ENCODE measurements at regions of chr10 and their contacts with region 1.

Region 1: GRCh38 chr10:103685880-103686669 is 169.3 kb downstream of the SH3PXD2A start:
- DNase-seq: peak; percentile 80
- H3K4me3 Mint-ChIP-seq: no peak overlapping the region
- H3K27ac Mint-ChIP-seq: no peak overlapping the region
- H3K4me1 Mint-ChIP-seq: peaks cover 13% of the 10 kb centered on the region
- H3K27me3 Mint-ChIP-seq: no peaks in the 10 kb centered on the region

Region 2: GRCh38 chr10:103598654-103599115 is 87.4 kb before region 1 on chr10:
- CTCF ChIA-PET with region 1: interaction called, 19 read pairs
- POLR2A ChIA-PET with region 1: interaction called, 3 read pairs
- DNase-seq: no peak
- H3K4me3 Mint-ChIP-seq: no peak overlapping the region
- H3K27ac Mint-ChIP-seq: no peak overlapping the region
- H3K4me1 Mint-ChIP-seq: no peaks in the 10 kb centered on the region
- H3K27me3 Mint-ChIP-seq: no peaks in the 10 kb centered on the region

Region 3: GRCh38 chr10:103605359-103606095 is 80.5 kb before region 1 on chr10:
- CTCF ChIA-PET with region 1: interaction called, 28 read pairs
- POLR2A ChIA-PET with region 1: interaction called, 3 read pairs
- DNase-seq: peak; percentile 46
- H3K4me3 Mint-ChIP-seq: no peak overlapping the region
- H3K27ac Mint-ChIP-seq: no peak overlapping the region
- H3K4me1 Mint-ChIP-seq: no peaks in the 10 kb centered on the region
- H3K27me3 Mint-ChIP-seq: no peaks in the 10 kb centered on the region

Region 4: DNA sequence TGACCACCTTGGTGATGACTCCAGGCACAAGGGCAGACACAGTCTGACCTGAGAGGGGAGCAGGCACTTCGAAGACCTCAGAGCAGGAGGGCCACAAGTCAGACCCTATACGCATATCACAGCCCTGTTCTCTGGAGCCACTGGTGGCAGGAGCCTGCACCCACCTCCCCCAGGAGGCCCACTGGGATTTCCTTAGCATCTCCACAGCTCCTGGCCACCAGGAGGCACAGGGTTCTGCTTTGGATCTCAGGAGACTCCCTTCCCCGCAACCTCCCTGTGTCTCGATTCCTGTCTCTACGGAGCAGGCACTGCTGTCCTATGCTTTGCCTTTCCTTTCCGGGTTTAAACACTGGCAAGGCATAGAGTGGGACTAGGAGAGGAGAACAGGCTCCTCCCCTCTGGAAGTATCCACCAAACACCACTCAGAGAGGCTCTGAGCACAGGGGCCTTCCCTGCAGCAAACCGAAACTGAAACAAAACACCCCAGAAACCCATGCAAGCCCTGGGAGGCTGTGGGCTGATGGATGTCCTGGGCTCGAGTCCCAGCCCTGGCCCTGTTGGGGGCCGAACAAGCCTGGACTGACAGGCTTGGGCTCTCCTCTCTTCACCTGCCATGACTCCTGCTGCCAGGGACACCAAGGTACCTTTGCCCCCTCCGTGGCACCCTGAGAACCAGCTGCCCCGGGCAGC is 26.3 kb before region 1 on chr10:
- CTCF ChIA-PET with region 1: interaction called, 17 read pairs
- POLR2A ChIA-PET with region 1: interaction called, 3 read pairs
- DNase-seq: peak; percentile 72
- H3K4me3 Mint-ChIP-seq: peak overlapping the region; percentile 82
- H3K27ac Mint-ChIP-seq: peak overlapping the region; percentile 74
- H3K4me1 Mint-ChIP-seq: peaks cover 26% of the 10 kb centered on the region
- H3K27me3 Mint-ChIP-seq: no peaks in the 10 kb centered on the region

Region 5: GRCh38 chr10:103696411-103697145 is 10.5 kb after region 1 on chr10:
- CTCF ChIA-PET with region 1: interaction called, 45 read pairs
- POLR2A ChIA-PET with region 1: interaction called, 5 read pairs
- DNase-seq: peak; percentile 89
- H3K4me3 Mint-ChIP-seq: peak overlapping the region; percentile 54
- H3K27ac Mint-ChIP-seq: peak overlapping the region; percentile 75
- H3K4me1 Mint-ChIP-seq: peaks cover 49% of the 10 kb centered on the region
- H3K27me3 Mint-ChIP-seq: no peaks in the 10 kb centered on the region

Measured in activated CD4-positive, alpha-beta memory T cell treated with anti-CD3 and anti-CD28 coated beads, Interleukin-2, amount 10 ng/mL, durations not matched to agents 7 days and 5 days (primary cell).